IMR-90 (cell line): ENCODE measurements at regions of chr2 and their contacts with region 1.

Region 1: DNA sequence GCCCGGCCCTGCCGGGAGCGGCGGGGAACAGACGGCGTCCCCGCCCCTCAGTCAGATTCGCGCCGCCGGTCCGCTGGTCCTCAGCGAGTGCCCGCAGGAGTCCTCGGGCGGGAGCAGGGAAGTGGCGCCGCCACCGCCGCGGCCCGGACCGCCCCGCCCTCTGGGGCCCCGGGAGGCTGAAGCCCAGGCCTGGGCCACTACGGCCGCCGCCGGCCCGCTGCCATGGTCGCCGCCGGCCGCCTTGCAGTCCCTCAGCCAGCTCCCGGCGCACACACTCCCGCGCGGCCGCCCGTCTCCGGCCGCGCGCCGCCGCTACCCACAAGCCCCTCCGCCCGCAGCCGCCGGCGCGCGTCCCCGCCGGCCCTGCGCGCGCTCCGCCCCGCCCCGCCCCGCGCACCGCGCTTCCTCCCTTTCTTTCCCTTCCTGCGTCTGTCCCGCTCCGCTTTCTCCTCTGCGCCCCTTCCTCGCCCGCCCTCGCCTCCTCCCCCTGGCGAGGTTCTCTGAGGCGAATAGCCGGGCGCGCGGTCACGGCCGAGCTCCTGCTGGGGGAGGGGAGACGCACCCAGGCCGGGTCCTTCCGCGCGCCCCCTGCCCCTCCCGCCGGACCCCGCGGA is at the start of gene ROCK2:
- DNase-seq: peak; percentile 79
- ATAC-seq: peak; percentile 80
- H3K4me3 ChIP-seq: peak within 1 kb of the TSS; percentile 87
- H3K27ac ChIP-seq: peak within 1 kb of the TSS; percentile 98
- H3K4me1 ChIP-seq: peaks cover 5% of the 10 kb centered on the region; the same call in 1 of the 2 replicates
- H3K27me3 ChIP-seq: no peaks in the 10 kb centered on the region
- CTCF ChIP-seq: no peak
- POLR2A ChIP-seq: peak; percentile 60
- RAD21 ChIP-seq: no peak
- total RNA-seq, gene ROCK2: 28.3 and 59.7 TPM in 2 replicates

Region 2: DNA sequence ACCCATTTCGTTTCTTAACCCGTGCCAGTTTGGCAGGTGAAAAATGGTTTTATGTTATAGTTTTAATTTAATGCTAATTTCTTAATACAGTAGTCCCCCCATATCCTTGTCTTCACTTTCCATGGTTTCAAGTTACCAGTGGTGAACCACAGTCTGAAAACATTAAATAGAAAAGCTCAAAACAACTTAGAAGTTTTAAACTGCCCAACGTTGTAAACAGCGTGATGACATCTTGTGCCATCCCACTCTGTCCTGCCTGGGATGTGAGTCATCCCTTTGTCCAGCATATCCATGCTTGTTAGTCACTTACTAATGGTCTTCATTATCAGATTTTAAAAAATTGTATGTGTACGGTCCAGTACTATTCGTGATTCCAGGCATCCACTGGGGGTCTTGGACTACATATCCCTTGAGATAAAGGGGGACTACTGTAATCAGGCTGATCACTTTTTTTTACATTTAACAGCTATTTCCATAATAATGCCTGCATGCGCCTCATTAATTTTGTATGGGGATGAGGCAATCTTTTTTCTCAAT is 157.3 kb before region 1 on chr2:
- CTCF ChIA-PET with region 1: no interaction called
- POLR2A ChIA-PET with region 1: no interaction called
- dilution Hi-C with region 1: no loop called
- in situ Hi-C with region 1: no loop called
- intact Hi-C with region 1: loop called (anchors 5 kb)
- DNase-seq: peak; percentile 77
- ATAC-seq: peak; percentile 77
- H3K4me3 ChIP-seq: no peak overlapping the region
- H3K27ac ChIP-seq: no peak overlapping the region
- H3K4me1 ChIP-seq: peaks cover 2% of the 10 kb centered on the region; the same call in 1 of the 2 replicates
- H3K27me3 ChIP-seq: no peaks in the 10 kb centered on the region
- CTCF ChIP-seq: no peak
- POLR2A ChIP-seq: no peak
- RAD21 ChIP-seq: no peak

Region 3: DNA sequence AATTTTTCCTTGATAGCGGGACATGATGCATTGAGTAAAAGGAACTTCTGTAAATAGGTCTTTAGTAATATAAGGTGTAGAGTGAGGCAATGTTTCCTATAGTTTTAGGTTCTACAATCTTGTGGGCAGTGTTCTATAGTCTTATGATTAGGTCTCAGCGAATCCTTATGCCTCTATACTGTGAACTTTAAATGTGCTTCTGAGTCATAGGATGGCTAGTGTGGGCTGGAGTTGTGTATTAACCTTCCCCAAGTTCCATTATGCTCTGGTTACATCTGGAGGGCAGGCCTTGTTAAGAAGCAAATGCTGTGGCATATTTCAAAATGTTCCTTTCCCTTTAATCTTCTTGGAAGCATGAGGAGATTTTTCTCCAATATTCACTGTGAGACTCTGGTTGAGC is 73.6 kb before region 1 on chr2:
- CTCF ChIA-PET with region 1: no interaction called
- POLR2A ChIA-PET with region 1: no interaction called
- dilution Hi-C with region 1: no loop called
- in situ Hi-C with region 1: no loop called
- intact Hi-C with region 1: loop called (anchors 5 kb)
- DNase-seq: peak; percentile 92
- ATAC-seq: peak; percentile 90
- H3K4me3 ChIP-seq: no peak overlapping the region
- H3K27ac ChIP-seq: no peak overlapping the region
- H3K4me1 ChIP-seq: peaks cover 6% of the 10 kb centered on the region
- H3K27me3 ChIP-seq: no peaks in the 10 kb centered on the region
- CTCF ChIP-seq: no peak
- POLR2A ChIP-seq: no peak
- RAD21 ChIP-seq: no peak

Region 4: DNA sequence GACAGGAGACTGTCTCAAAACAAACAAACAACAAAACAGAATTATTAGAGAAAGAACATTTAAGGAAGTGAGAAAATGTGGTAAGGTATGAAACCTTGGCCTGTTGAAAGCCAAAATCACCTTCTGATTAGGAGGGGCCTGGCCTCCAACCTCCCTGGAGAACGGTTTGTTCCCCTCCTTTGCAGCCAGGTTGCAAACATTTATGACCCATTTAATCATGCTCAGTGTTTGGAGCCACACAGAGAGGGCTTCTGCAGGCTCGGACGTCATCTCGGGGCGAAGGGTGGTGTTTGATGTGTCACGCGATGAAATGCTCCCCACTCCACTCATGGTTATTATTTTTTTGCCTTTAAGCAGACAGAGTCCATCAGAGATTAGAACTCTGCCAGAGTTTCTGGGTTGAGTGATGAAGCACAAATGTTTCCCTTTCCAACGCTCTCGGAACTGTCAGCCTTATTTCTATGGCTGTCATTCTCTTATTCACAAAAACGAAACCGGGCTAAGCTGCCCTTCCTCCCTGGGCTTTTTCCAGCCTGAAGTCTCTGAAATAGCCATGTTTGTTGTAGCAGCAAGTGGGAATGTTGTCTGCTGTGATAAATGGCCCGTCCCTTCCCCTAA is 33.6 kb after region 1 on chr2:
- CTCF ChIA-PET with region 1: interaction called, 3 read pairs
- POLR2A ChIA-PET with region 1: interaction called, 4 read pairs
- dilution Hi-C with region 1: no loop called
- in situ Hi-C with region 1: no loop called
- intact Hi-C with region 1: loop called (anchors 1 kb)
- DNase-seq: peak; percentile 79
- ATAC-seq: peak; percentile 8; the same call in 1 of the 2 replicates
- H3K4me3 ChIP-seq: peak overlapping the region; percentile 11; the same call in 1 of the 2 replicates
- H3K27ac ChIP-seq: peak overlapping the region; percentile 68
- H3K4me1 ChIP-seq: peaks cover 35% of the 10 kb centered on the region
- H3K27me3 ChIP-seq: no peaks in the 10 kb centered on the region
- CTCF ChIP-seq: no peak
- POLR2A ChIP-seq: peak; percentile 39; the same call in 1 of the 2 replicates
- RAD21 ChIP-seq: no peak

Region 5: DNA sequence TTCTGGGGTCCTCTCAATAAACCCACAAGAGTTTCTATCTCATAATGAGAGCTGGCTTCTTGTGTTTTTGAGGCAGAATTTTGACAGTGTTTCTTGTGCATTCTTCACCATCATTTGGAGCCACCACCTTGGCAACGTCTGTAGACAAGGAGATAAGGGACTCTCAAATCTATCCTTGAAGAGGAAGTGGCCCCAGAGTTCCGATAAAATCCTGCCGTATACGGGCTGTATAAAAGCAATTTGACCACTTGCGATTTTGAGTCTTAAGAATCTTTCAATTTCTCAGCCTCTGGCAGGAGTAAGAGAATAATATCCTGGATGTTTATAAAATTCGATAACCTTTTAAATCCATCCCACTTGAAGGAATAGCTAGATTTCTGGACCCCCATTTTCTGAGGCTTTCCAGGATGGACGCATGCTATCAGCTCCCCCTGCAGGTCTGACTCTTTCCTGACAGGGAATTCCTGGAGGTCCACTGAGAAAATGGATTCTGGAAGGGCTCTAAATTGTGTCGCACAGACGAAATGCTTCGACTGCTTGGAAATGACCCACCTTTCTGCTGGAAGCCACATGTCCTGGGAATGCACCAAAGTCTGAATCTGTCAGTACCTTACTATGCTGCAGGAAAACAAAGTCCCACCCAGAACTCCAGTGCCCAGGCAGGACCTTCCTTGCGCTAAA is 67.5 kb after region 1 on chr2:
- CTCF ChIA-PET with region 1: no interaction called
- POLR2A ChIA-PET with region 1: no interaction called
- dilution Hi-C with region 1: no loop called
- in situ Hi-C with region 1: no loop called
- intact Hi-C with region 1: loop called (anchors 1 kb)
- DNase-seq: peak; percentile 63
- ATAC-seq: peak; percentile 54
- H3K4me3 ChIP-seq: peak overlapping the region; percentile 37; the same call in 1 of the 2 replicates
- H3K27ac ChIP-seq: no peak overlapping the region
- H3K4me1 ChIP-seq: peaks cover 5% of the 10 kb centered on the region
- H3K27me3 ChIP-seq: no peaks in the 10 kb centered on the region
- CTCF ChIP-seq: peak; percentile 91
- POLR2A ChIP-seq: no peak
- RAD21 ChIP-seq: peak; percentile 92

Region 6: GRCh38 chr2:11477994-11478393 is 133.5 kb after region 1 on chr2:
- CTCF ChIA-PET with region 1: no interaction called
- POLR2A ChIA-PET with region 1: no interaction called
- dilution Hi-C with region 1: no loop called
- in situ Hi-C with region 1: no loop called
- intact Hi-C with region 1: no loop called
- DNase-seq: peak; percentile 85
- ATAC-seq: peak; percentile 80
- H3K4me3 ChIP-seq: no peak overlapping the region
- H3K27ac ChIP-seq: no peak overlapping the region
- H3K4me1 ChIP-seq: peaks cover under 1% of the 10 kb centered on the region; the same call in 1 of the 2 replicates
- H3K27me3 ChIP-seq: peaks cover 48% of the 10 kb centered on the region
- CTCF ChIP-seq: peak; percentile 76
- POLR2A ChIP-seq: no peak
- RAD21 ChIP-seq: peak; percentile 74